Activated CD4-positive, alpha-beta memory T cell treated with anti-CD3 and anti-CD28 coated beads for 36 hours (primary cell): ENCODE measurements at regions of chrX and their contacts with region 1.

Region 1: GRCh38 chrX:70289793-70290776 is at the starts of genes KIF4A and PDZD11:
- DNase-seq: peak; percentile 90
- H3K4me3 Mint-ChIP-seq: peak within 1 kb of the TSS; percentile 91
- H3K27ac Mint-ChIP-seq: peak within 1 kb of the TSS; percentile 74
- H3K4me1 Mint-ChIP-seq: peaks cover 10% of the 10 kb centered on the region
- H3K27me3 Mint-ChIP-seq: no peaks in the 10 kb centered on the region
- total RNA-seq, gene KIF4A: 26.4 to 28.3 TPM
- total RNA-seq, gene PDZD11: 25.9 to 28.1 TPM

Region 2: GRCh38 chrX:70133303-70134115 is 156.6 kb before region 1 on chrX and contains the start of gene IGBP1:
- CTCF ChIA-PET with region 1: no interaction called
- POLR2A ChIA-PET with region 1: no interaction called
- intact Hi-C with region 1: loop called (anchors 10 kb)
- DNase-seq: peak; percentile 85
- H3K4me3 Mint-ChIP-seq: peak within 1 kb of the TSS; percentile 98
- H3K27ac Mint-ChIP-seq: peak within 1 kb of the TSS; percentile 96
- H3K4me1 Mint-ChIP-seq: peaks cover 24% of the 10 kb centered on the region
- H3K27me3 Mint-ChIP-seq: no peaks in the 10 kb centered on the region
- total RNA-seq, gene IGBP1: 50.8 to 51.5 TPM

Region 3: GRCh38 chrX:70324326-70324725 is 34.2 kb after region 1 on chrX:
- CTCF ChIA-PET with region 1: no interaction called
- POLR2A ChIA-PET with region 1: no interaction called
- intact Hi-C with region 1: no loop called
- DNase-seq: no peak
- H3K4me3 Mint-ChIP-seq: no peak overlapping the region
- H3K27ac Mint-ChIP-seq: no peak overlapping the region
- H3K4me1 Mint-ChIP-seq: no peaks in the 10 kb centered on the region
- H3K27me3 Mint-ChIP-seq: no peaks in the 10 kb centered on the region